ENCODE measurements at regions of chr6 and their contacts with region 1.

Region 1: DNA sequence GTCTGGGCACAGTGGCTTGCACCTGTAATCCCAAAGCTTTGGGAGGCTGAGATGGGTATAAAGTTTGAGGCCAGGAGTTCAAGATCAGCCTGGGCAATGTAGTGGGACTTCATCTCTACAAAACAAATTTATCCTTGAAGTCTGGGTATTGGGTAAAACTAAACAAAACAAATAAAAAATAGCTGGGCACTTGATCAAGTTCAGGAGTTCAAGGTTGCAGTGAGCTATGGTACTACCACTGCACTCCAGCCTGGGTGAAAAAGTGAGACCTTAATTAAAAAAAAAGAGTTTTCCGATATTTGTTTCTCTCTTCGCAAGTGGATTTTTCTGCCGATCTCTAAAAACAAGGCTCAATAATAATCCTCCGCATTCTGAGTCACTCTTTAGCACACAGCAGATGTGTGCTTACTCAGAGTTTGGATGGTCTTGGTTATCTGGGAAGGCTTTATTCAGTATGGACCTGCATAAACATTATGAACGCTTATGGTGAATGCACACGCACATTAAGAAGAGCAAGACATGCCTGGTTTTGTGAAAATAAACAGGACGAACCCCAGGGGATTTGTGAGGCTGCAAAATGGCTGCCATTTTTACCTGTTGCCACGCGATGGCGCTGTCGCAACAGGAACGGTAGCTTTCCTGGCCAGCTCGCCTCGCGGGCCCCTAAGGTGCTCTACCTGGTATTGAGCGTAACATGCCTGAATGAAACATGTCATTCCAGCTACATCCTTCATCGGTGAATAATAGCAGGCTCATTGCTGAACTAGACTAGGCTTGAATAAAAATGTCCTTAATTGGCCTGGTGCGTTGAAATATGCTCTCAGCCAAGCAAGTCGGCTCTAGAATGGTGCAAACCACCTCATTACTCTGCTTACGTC is 6.0 kb downstream of the OPN5 start:
- DNase-seq: peak; percentile 77
- H3K4me3 ChIP-seq: peak overlapping the region in 1 of 2 donors; percentile 2
- H3K27ac ChIP-seq: no peak overlapping the region
- H3K4me1 ChIP-seq: no peaks in the 10 kb centered on the region
- H3K27me3 ChIP-seq: no peaks in the 10 kb centered on the region
- CTCF ChIP-seq: peak; percentile 56 to 91 (median 87)
- POLR2A ChIP-seq: no peak

Region 2: GRCh38 chr6:47032974-47033373 is 754.9 kb before region 1 on chr6:
- intact Hi-C with region 1: no loop called
- DNase-seq: no peak
- H3K4me3 ChIP-seq: no peak overlapping the region
- H3K27ac ChIP-seq: no peak overlapping the region
- H3K4me1 ChIP-seq: peaks cover 16% of the 10 kb centered on the region
- H3K27me3 ChIP-seq: no peaks in the 10 kb centered on the region
- CTCF ChIP-seq: no peak
- POLR2A ChIP-seq: no peak

Region 3: DNA sequence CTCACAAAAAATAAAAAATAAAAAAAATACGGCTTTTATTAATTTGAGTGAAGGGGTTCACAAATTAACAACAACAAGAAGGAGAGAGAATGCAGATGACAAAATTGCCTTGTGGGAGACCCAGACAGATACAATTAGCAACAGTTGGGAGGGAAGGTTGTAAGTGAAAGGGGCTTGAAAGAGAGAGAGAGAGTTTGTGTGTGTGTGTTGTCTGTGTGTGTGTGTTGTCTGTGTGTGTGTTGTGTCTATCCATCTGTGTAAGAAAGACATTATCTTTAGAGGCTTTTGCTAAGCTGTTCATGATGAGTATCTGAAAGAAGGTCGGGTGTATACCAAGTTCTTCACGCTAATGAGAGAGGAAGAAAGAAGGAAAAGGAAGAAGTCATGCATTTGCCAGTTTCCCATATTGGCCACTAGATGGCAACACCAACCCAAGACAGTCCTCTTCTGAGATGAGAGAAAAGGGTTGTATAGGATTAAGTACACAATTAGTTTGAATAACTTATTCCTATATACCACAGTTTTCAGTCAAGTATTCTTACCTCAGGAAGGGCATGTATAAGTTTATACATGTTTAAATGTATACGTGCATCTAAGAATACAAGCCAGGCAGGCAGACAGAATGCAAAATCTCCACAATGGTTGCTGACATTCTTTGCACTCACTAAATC is 374.0 kb before region 1 on chr6:
- intact Hi-C with region 1: loop called (anchors 10 kb)
- DNase-seq: peak; percentile 51
- H3K4me3 ChIP-seq: peak overlapping the region; percentile 7 to 36
- H3K27ac ChIP-seq: peak overlapping the region in 1 of 2 donors; percentile 66
- H3K4me1 ChIP-seq: no peaks in the 10 kb centered on the region
- H3K27me3 ChIP-seq: no peaks in the 10 kb centered on the region
- CTCF ChIP-seq: peak; percentile 69 to 91 (median 87)
- POLR2A ChIP-seq: no peak

Region 4: DNA sequence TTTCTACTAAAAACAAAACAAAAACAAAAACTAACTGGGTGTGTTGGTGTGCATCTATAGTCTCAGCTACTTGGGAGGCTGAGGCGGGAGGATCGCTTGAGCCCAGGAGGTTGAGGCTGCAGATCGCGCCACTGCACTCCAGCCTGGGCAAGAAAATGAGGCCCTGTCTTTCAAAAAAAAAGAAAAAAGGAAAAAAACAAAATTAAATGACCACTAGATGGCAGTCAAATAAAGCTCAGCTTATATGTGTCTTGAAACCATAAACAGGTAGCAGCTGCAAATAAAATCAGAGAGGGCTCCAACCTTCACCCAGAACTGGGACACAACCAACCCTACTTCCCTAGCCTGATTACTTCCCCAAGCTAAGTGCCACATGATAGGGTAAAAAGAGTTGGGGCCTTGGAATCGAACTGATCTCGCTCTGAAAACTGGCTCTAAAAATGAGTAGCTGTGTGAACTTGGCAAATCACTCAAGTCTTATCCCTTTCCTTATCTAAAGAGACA is 156.5 kb before region 1 on chr6:
- intact Hi-C with region 1: loop called (anchors 10 kb)
- DNase-seq: no peak
- H3K4me3 ChIP-seq: no peak overlapping the region
- H3K27ac ChIP-seq: no peak overlapping the region
- H3K4me1 ChIP-seq: peaks cover 7% of the 10 kb centered on the region
- H3K27me3 ChIP-seq: no peaks in the 10 kb centered on the region
- CTCF ChIP-seq: peak; percentile 26 to 78 (median 40)
- POLR2A ChIP-seq: no peak

Region 5: GRCh38 chr6:49409951-49410542 is 1622.2 kb after region 1 on chr6:
- intact Hi-C with region 1: loop called (anchors 10 kb)
- DNase-seq: peak; percentile 88
- H3K4me3 ChIP-seq: no peak overlapping the region
- H3K27ac ChIP-seq: no peak overlapping the region
- H3K4me1 ChIP-seq: no peaks in the 10 kb centered on the region
- H3K27me3 ChIP-seq: no peaks in the 10 kb centered on the region
- CTCF ChIP-seq: peak; percentile 60 to 88 (median 84)
- POLR2A ChIP-seq: no peak

Measured in testis (tissue), 5 donors.